ENCODE measurements at regions of chr7 and their contacts with region 1.

Region 1: GRCh38 chr7:51817694-51818225 is 501.2 kb upstream of the COBL start:
- DNase-seq: no peak
- ATAC-seq: no peak
- H3K4me3 ChIP-seq: no peak overlapping the region
- H3K4me3 Mint-ChIP-seq: no peak overlapping the region
- H3K27ac ChIP-seq: no peak overlapping the region
- H3K27ac Mint-ChIP-seq: no peak overlapping the region
- H3K4me1 ChIP-seq: no peaks in the 10 kb centered on the region
- H3K4me1 Mint-ChIP-seq: no peaks in the 10 kb centered on the region
- H3K27me3 ChIP-seq: no peaks in the 10 kb centered on the region
- H3K27me3 Mint-ChIP-seq: no peaks in the 10 kb centered on the region
- CTCF ChIP-seq: no peak

Region 2: GRCh38 chr7:51629206-51629605 is 188.6 kb before region 1 on chr7:
- CTCF ChIA-PET with region 1: no interaction called
- POLR2A ChIA-PET with region 1: no interaction called
- intact Hi-C with region 1: no loop called
- DNase-seq: no peak
- ATAC-seq: no peak
- H3K4me3 ChIP-seq: no peak overlapping the region
- H3K4me3 Mint-ChIP-seq: no peak overlapping the region
- H3K27ac ChIP-seq: no peak overlapping the region
- H3K27ac Mint-ChIP-seq: no peak overlapping the region
- H3K4me1 ChIP-seq: no peaks in the 10 kb centered on the region
- H3K4me1 Mint-ChIP-seq: no peaks in the 10 kb centered on the region
- H3K27me3 ChIP-seq: no peaks in the 10 kb centered on the region
- H3K27me3 Mint-ChIP-seq: no peaks in the 10 kb centered on the region
- CTCF ChIP-seq: no peak

Region 3: DNA sequence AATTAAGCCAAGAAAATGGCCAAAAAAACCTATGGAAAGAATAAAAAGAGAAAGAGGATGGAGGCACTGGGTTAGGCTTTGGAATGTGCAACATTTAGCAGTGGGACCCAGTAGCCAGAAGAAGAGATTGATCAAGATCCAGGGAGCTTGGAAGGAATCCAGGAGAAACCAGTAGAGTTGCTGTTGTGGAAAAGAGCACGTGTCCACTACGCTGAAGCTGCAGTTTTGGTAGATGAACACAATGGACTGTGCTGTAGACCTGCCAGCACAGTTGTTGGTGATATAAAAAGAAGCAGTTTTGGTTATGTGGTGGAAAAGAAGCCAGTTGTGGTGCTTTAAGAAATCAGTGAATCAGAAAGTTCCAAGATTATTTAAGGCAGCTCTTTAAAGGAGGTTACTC is 415.5 kb after region 1 on chr7:
- CTCF ChIA-PET with region 1: no interaction called
- POLR2A ChIA-PET with region 1: no interaction called
- intact Hi-C with region 1: no loop called
- DNase-seq: no peak
- ATAC-seq: no peak
- H3K4me3 ChIP-seq: no peak overlapping the region
- H3K4me3 Mint-ChIP-seq: no peak overlapping the region
- H3K27ac ChIP-seq: no peak overlapping the region
- H3K27ac Mint-ChIP-seq: no peak overlapping the region
- H3K4me1 ChIP-seq: no peaks in the 10 kb centered on the region
- H3K4me1 Mint-ChIP-seq: no peaks in the 10 kb centered on the region
- H3K27me3 ChIP-seq: no peaks in the 10 kb centered on the region
- H3K27me3 Mint-ChIP-seq: no peaks in the 10 kb centered on the region
- CTCF ChIP-seq: no peak

Region 4: GRCh38 chr7:52620849-52621248 is 803.1 kb after region 1 on chr7:
- CTCF ChIA-PET with region 1: no interaction called
- POLR2A ChIA-PET with region 1: no interaction called
- intact Hi-C with region 1: loop called (anchors 5 kb)
- DNase-seq: no peak
- ATAC-seq: no peak
- H3K4me3 ChIP-seq: no peak overlapping the region
- H3K4me3 Mint-ChIP-seq: no peak overlapping the region
- H3K27ac ChIP-seq: no peak overlapping the region
- H3K27ac Mint-ChIP-seq: no peak overlapping the region
- H3K4me1 ChIP-seq: no peaks in the 10 kb centered on the region
- H3K4me1 Mint-ChIP-seq: no peaks in the 10 kb centered on the region
- H3K27me3 ChIP-seq: no peaks in the 10 kb centered on the region
- H3K27me3 Mint-ChIP-seq: no peaks in the 10 kb centered on the region
- CTCF ChIP-seq: no peak

Measured in B cell (primary cell).